Colonic mucosa (tissue), 4 donors: ENCODE measurements at regions of chr14 and their contacts with region 1.

Region 1: GRCh38 chr14:96424109-96424989 is 32.4 kb downstream of the AK7 start:
- DNase-seq: peak; percentile 45
- H3K4me3 ChIP-seq: peak overlapping the region; percentile 44
- H3K27ac ChIP-seq: no peak overlapping the region
- H3K4me1 ChIP-seq: no peaks in the 10 kb centered on the region
- H3K27me3 ChIP-seq: no peaks in the 10 kb centered on the region
- CTCF ChIP-seq: peak; percentile 73

Region 2: DNA sequence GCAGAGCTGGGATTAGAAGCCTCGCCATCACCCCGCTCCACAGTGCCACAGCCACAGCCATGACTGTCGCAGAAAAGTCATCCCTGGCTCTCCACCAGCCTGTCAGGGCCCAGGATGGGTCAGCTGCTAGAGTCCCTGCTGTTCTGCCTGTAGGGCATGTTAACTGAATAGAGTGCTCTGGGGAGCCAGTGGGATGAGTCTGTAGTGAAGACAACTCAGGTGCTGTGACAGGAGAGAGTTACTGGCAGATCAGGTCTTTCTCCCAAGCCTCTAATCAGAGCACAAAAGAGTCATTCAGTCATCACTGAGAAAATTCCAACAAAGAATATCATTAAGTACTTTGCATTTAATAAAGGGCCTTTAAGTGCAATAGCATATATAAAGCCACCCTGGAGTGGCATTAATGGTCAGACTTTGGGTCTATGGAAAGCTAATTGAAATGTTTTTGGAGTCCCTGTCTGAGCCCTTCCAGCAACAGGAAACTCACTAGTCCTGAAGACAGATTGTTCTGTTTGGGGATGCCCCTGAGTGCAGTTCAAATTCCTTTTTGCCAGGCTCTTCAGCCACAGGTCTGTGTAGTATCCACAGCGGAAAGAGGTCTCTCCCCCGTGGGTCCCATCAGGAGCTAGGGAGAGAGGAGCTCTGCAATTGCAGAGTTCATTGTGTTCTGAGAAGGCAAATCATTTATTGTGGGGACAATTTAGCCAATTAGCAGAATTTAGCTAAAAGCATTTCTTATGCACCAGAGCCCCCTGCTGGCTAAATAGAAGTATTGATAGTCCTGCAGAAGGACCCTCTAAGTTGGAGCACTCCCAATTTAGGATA is 430.4 kb before region 1 on chr14:
- intact Hi-C with region 1: loop called (anchors 5 kb)
- DNase-seq: peak; percentile 21
- H3K4me3 ChIP-seq: no peak overlapping the region
- H3K27ac ChIP-seq: no peak overlapping the region
- H3K4me1 ChIP-seq: no peaks in the 10 kb centered on the region
- H3K27me3 ChIP-seq: no peaks in the 10 kb centered on the region
- CTCF ChIP-seq: peak; percentile 63

Region 3: DNA sequence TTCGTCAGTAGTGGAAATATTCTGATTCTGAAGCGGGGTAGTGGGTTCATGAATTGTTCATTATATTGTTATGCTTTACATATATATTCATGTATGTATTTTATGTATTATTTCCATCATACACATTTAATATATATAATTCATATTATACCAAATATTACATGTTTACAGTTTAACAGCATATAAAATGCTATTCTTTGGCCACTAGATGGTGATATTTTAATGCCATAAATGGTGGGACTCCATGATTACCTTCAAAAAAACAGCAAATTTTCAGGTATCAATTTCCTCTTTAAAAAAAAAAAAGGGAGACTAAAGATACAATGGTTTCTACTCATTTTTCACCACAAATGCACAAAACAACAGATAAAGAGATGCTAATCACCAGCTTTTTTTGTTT is 127.3 kb before region 1 on chr14:
- intact Hi-C with region 1: loop called (anchors 5 kb)
- DNase-seq: no peak
- H3K4me3 ChIP-seq: no peak overlapping the region
- H3K27ac ChIP-seq: no peak overlapping the region
- H3K4me1 ChIP-seq: no peaks in the 10 kb centered on the region
- H3K27me3 ChIP-seq: no peaks in the 10 kb centered on the region
- CTCF ChIP-seq: peak; percentile 43

Region 4: GRCh38 chr14:96362965-96363756 is 61.2 kb before region 1 on chr14 and contains the starts of genes ATG2B and GSKIP:
- intact Hi-C with region 1: loop called (anchors 10 kb)
- DNase-seq: peak; percentile 97
- H3K4me3 ChIP-seq: peak within 1 kb of the TSS; percentile 78
- H3K27ac ChIP-seq: peak within 1 kb of the TSS; percentile 95
- H3K4me1 ChIP-seq: peaks cover 8% of the 10 kb centered on the region
- H3K27me3 ChIP-seq: no peaks in the 10 kb centered on the region
- CTCF ChIP-seq: no peak
- total RNA-seq, gene ATG2B: 13.6 to 20.8 TPM
- total RNA-seq, gene GSKIP: 107 to 168 TPM

Region 5: DNA sequence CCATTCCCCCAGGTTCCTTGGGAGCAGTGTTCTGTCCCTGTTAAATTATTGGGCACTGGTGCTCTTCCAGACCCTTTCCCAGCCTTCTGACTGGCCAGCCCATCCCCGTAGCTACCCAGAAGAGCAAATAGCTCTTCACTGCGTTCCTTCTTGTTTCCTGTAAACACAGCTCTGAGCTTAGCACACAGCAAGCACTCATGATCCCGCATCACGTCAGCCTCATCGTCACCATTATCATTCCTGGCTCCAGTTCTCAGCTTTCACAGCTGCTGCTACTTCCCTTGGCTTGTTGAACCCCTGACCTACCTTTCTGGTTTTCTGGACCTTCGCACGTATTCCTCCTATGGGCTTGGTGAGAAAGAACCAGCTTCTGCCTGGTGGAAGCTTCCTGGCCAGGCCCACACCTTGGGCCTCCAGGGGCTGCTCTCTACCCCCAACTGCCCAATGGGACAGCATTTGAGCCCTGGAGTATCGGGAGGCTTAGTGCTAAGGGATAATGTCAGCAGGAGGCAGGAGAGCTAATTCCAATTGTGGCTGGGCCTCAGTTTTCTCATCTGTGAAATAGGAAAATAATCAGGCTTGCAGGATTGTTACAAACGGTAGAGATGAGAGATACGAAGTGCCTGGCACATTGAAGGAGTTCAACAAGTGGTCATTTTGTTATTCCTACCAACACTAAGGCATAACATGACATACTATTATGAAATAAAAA is 55.2 kb after region 1 on chr14:
- intact Hi-C with region 1: no loop called
- DNase-seq: no peak
- H3K4me3 ChIP-seq: no peak overlapping the region
- H3K27ac ChIP-seq: no peak overlapping the region
- H3K4me1 ChIP-seq: no peaks in the 10 kb centered on the region
- H3K27me3 ChIP-seq: no peaks in the 10 kb centered on the region
- CTCF ChIP-seq: no peak